OCI-LY7 (cell line): ENCODE measurements at regions of chr13 and their contacts with region 1.

Region 1: GRCh38 chr13:92403606-92404005 is 823.0 kb upstream of the GPC6 start:
- DNase-seq: no peak
- H3K4me3 ChIP-seq: no peak overlapping the region
- H3K27ac ChIP-seq: no peak overlapping the region
- H3K4me1 ChIP-seq: no peaks in the 10 kb centered on the region
- CTCF ChIP-seq: no peak

Region 2: GRCh38 chr13:92390217-92390616 is 13.4 kb before region 1 on chr13:
- CTCF ChIA-PET with region 1: no interaction called
- POLR2A ChIA-PET with region 1: interaction called, 14 read pairs
- intact Hi-C with region 1: no loop called
- DNase-seq: no peak
- H3K4me3 ChIP-seq: no peak overlapping the region
- H3K27ac ChIP-seq: no peak overlapping the region
- H3K4me1 ChIP-seq: no peaks in the 10 kb centered on the region
- CTCF ChIP-seq: no peak